ENCODE measurements at regions of chr1 and their contacts with region 1.

Region 1: GRCh38 chr1:7975212-7975865 is 13.8 kb downstream of the PARK7 start:
- DNase-seq: peak; percentile 75
- ATAC-seq: peak; percentile 97
- H3K4me3 ChIP-seq: no peak overlapping the region
- H3K27ac ChIP-seq: no peak overlapping the region
- H3K4me1 ChIP-seq: no peaks in the 10 kb centered on the region; the same call in 1 of the 2 replicates
- H3K27me3 ChIP-seq: no peaks in the 10 kb centered on the region
- CTCF ChIP-seq: peak; percentile 98
- POLR2A ChIP-seq: no peak
- RAD21 ChIP-seq: peak; percentile 97

Region 2: DNA sequence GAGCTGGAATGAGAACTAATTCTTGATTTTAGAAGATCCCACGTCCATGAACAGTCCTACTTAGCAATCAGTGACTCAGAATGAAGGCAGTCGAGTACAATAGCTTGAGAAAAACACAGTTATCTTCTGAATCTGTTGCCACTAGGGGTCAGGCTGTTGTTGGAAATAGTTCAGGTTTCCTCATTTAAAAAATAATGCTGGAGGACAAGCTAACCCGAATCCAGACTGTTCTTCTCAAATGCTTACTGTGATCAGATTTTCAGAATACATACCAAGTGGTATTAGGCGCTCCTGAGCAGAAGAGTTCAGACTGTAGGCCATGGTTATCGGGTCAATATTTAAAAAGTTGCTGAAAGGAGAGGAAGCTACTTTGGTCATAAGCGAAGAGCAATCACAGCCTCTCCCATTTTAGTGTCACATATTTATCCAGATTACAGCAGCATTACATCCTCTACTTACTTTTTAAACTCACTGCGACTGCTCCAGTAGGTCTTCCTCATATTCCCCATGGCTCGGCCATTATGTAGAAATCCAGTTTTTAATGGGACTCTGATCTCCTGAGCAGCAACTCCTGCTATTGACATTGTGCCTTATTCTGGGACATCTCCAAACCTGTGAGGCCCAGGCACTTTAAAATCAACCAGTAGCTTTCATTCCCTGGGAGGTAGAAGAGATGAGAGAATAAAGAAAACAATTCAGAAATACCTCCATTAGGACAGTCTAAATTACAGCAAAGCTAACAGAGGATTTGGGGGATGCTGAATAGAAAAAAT is 39.9 kb after region 1 on chr1:
- CTCF ChIA-PET with region 1: interaction called, 21 read pairs
- POLR2A ChIA-PET with region 1: no interaction called
- dilution Hi-C with region 1: no loop called
- in situ Hi-C with region 1: loop called (anchors 5 kb)
- intact Hi-C with region 1: no loop called
- DNase-seq: peak; percentile 89
- ATAC-seq: peak; percentile 73
- H3K4me3 ChIP-seq: no peak overlapping the region
- H3K27ac ChIP-seq: peak overlapping the region; percentile 58; the same call in 1 of the 2 replicates
- H3K4me1 ChIP-seq: peaks cover 20% of the 10 kb centered on the region
- H3K27me3 ChIP-seq: no peaks in the 10 kb centered on the region
- CTCF ChIP-seq: peak; percentile 70
- POLR2A ChIP-seq: peak; percentile 39
- RAD21 ChIP-seq: peak; percentile 64

Region 3: GRCh38 chr1:8348777-8349491 is 373.6 kb after region 1 on chr1:
- CTCF ChIA-PET with region 1: no interaction called
- POLR2A ChIA-PET with region 1: no interaction called
- dilution Hi-C with region 1: no loop called
- in situ Hi-C with region 1: loop called (anchors 5 kb)
- intact Hi-C with region 1: loop called (anchors 1 kb)
- DNase-seq: peak; percentile 58
- ATAC-seq: peak; percentile 70
- H3K4me3 ChIP-seq: no peak overlapping the region
- H3K27ac ChIP-seq: no peak overlapping the region
- H3K4me1 ChIP-seq: peaks cover 17% of the 10 kb centered on the region
- H3K27me3 ChIP-seq: no peaks in the 10 kb centered on the region
- CTCF ChIP-seq: peak; percentile 76
- POLR2A ChIP-seq: no peak
- RAD21 ChIP-seq: peak; percentile 89

Region 4: DNA sequence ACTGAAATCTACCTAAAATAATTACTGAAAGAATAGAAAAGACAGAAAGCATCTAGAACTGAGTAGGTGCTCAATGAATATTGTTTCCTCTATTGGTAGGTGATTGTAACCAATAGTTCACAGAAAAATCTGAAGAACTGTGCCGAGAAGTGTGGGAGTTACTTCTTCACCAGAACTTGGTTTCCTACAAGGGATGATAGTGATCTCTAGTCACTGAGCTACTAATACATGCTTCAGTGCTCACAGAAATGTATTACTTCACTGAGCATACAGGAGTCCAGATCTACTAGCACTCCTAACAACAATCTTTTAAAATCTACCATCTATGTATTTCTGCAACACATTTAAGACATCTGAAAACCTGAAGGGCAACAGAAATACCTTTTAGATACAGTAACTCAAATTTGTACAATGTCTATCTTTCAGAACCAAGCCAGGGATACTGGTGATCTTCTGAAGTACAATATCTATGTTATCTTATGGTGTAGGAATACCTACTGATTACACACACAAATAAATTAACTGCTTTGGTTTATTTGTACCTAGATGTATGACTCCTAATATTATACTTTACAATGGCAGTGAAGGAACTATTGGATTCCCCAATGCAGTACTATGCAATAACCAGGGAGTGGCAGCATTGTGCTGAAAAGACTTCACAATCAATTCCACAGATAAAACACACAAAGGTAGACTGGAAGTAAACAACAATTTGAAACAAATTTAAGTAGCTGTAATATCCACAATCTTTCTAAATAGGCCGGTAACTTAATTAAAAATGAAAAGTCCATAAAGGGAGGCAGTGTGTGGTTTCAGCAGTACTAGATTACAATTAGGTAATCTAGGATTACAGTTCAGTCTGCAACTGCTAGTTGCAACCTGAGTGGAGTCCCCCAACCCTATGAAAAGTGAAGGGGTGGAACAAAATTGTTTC is 585.5 kb after region 1 on chr1:
- CTCF ChIA-PET with region 1: no interaction called
- POLR2A ChIA-PET with region 1: no interaction called
- dilution Hi-C with region 1: no loop called
- in situ Hi-C with region 1: loop called (anchors 25 kb)
- intact Hi-C with region 1: no loop called
- DNase-seq: peak; percentile 60
- ATAC-seq: peak; percentile 85
- H3K4me3 ChIP-seq: no peak overlapping the region
- H3K27ac ChIP-seq: no peak overlapping the region
- H3K4me1 ChIP-seq: peaks cover 7% of the 10 kb centered on the region
- H3K27me3 ChIP-seq: no peaks in the 10 kb centered on the region
- CTCF ChIP-seq: peak; percentile 84
- POLR2A ChIP-seq: no peak
- RAD21 ChIP-seq: peak; percentile 89

Region 5: GRCh38 chr1:8858888-8859706 is 883.8 kb after region 1 on chr1:
- CTCF ChIA-PET with region 1: no interaction called
- POLR2A ChIA-PET with region 1: no interaction called
- dilution Hi-C with region 1: no loop called
- in situ Hi-C with region 1: loop called (anchors 25 kb)
- intact Hi-C with region 1: no loop called
- DNase-seq: peak; percentile 67
- ATAC-seq: peak; percentile 38
- H3K4me3 ChIP-seq: no peak overlapping the region
- H3K27ac ChIP-seq: no peak overlapping the region
- H3K4me1 ChIP-seq: peaks cover 8% of the 10 kb centered on the region
- H3K27me3 ChIP-seq: no peaks in the 10 kb centered on the region
- CTCF ChIP-seq: peak; percentile 60
- POLR2A ChIP-seq: no peak
- RAD21 ChIP-seq: peak; percentile 56

Measured in IMR-90 (cell line).